WTC11 (cell line): ENCODE measurements at regions of chr9 and their contacts with region 1.

Region 1: DNA sequence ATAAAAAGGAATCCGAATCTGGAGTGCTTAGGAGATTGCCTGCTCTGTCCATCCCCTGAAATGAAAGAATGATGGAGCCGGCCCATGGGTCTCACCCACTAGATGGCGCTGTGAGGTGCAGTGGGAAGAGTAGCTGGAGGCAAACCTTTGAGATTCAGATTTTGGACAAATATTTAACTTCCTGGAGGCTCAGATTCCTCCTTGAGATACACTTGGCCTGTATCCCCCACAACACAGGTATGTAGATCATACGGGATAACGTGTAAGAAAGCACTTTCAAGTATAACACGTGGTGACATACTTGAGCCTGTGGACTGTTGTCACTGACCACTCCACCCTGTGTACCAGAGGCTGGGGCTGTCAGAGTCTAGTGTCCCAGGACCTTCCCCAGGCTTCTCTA is 32.3 kb downstream of the TRMO start:
- DNase-seq: peak; percentile 81
- ATAC-seq: peak; percentile 89
- H3K4me3 Mint-ChIP-seq: no peak overlapping the region
- H3K27ac Mint-ChIP-seq: no peak overlapping the region
- H3K4me1 Mint-ChIP-seq: peaks cover 6% of the 10 kb centered on the region; the same call in 1 of the 2 replicates
- H3K27me3 Mint-ChIP-seq: peaks cover 46% of the 10 kb centered on the region
- CTCF ChIP-seq: peak; percentile 81

Region 2: GRCh38 chr9:97848582-97849237 is 41.3 kb before region 1 on chr9:
- CTCF ChIA-PET with region 1: interaction called, 10 read pairs
- POLR2A ChIA-PET with region 1: no interaction called
- DNase-seq: no peak
- ATAC-seq: no peak
- H3K4me3 Mint-ChIP-seq: peak overlapping the region; percentile 60
- H3K27ac Mint-ChIP-seq: no peak overlapping the region
- H3K4me1 Mint-ChIP-seq: peaks cover 37% of the 10 kb centered on the region
- H3K27me3 Mint-ChIP-seq: peaks cover 89% of the 10 kb centered on the region
- CTCF ChIP-seq: no peak

Region 3: GRCh38 chr9:97863314-97863713 is 26.7 kb before region 1 on chr9:
- CTCF ChIA-PET with region 1: interaction called, 12 read pairs
- POLR2A ChIA-PET with region 1: no interaction called
- DNase-seq: no peak
- ATAC-seq: peak; percentile 50; the same call in 1 of the 2 replicates
- H3K4me3 Mint-ChIP-seq: no peak overlapping the region
- H3K27ac Mint-ChIP-seq: no peak overlapping the region
- H3K4me1 Mint-ChIP-seq: peaks cover 8% of the 10 kb centered on the region
- H3K27me3 Mint-ChIP-seq: peaks cover 83% of the 10 kb centered on the region
- CTCF ChIP-seq: no peak

Region 4: GRCh38 chr9:97868859-97869258 is 21.2 kb before region 1 on chr9:
- CTCF ChIA-PET with region 1: interaction called, 26 read pairs
- POLR2A ChIA-PET with region 1: no interaction called
- DNase-seq: no peak
- ATAC-seq: peak; percentile 72
- H3K4me3 Mint-ChIP-seq: no peak overlapping the region
- H3K27ac Mint-ChIP-seq: no peak overlapping the region
- H3K4me1 Mint-ChIP-seq: peaks cover 16% of the 10 kb centered on the region
- H3K27me3 Mint-ChIP-seq: peaks cover 33% of the 10 kb centered on the region
- CTCF ChIP-seq: no peak

Region 5: GRCh38 chr9:97873877-97874276 is 16.2 kb before region 1 on chr9:
- CTCF ChIA-PET with region 1: interaction called, 26 read pairs
- POLR2A ChIA-PET with region 1: no interaction called
- DNase-seq: no peak
- ATAC-seq: no peak
- H3K4me3 Mint-ChIP-seq: no peak overlapping the region
- H3K27ac Mint-ChIP-seq: no peak overlapping the region
- H3K4me1 Mint-ChIP-seq: peaks cover 12% of the 10 kb centered on the region
- H3K27me3 Mint-ChIP-seq: peaks cover 4% of the 10 kb centered on the region
- CTCF ChIP-seq: no peak

Region 6: DNA sequence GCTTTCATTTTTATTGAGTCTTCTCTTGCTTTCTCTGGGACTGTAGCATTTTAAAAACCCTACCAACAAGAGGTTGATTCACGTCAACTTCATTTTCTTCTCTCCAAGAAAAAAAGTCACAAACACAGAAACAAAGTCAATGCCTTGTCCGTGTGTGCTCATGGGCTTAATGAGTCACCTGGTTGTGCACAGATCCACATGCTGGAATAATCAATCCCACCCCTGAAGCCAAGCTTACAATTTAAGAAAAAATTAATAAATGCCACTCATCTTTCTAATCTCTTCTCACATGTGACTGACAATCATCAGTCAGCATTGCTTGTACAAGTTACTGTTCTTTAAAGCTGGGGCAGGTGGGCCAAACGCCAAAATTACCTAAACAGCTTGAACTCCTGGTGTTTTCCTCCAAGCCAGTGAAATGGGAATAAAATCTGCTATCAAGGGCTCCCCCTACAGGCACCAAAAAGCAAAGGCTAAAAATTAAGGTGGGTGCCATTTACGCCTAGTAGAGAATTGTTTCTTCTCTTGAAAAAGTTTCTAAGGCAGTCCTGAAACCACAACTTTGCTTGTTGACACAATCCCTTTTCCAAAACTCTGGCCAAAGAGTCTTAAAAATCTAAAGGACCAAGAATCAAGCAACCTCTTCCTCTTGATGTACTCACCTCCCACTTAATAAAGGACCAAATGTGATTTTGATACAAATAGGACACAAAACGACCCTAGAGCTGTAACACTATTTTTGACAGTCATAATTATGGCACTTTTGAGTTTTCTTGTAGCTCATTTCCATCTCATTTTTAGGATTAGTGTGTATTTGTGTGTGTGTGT is 10.9 kb after region 1 on chr9:
- CTCF ChIA-PET with region 1: interaction called, 70 read pairs
- POLR2A ChIA-PET with region 1: no interaction called
- DNase-seq: no peak
- ATAC-seq: peak; percentile 65
- H3K4me3 Mint-ChIP-seq: no peak overlapping the region
- H3K27ac Mint-ChIP-seq: no peak overlapping the region
- H3K4me1 Mint-ChIP-seq: peaks cover 3% of the 10 kb centered on the region; the same call in 1 of the 2 replicates
- H3K27me3 Mint-ChIP-seq: no peaks in the 10 kb centered on the region
- CTCF ChIP-seq: peak; percentile 47; the same call in 1 of the 2 replicates

Region 7: DNA sequence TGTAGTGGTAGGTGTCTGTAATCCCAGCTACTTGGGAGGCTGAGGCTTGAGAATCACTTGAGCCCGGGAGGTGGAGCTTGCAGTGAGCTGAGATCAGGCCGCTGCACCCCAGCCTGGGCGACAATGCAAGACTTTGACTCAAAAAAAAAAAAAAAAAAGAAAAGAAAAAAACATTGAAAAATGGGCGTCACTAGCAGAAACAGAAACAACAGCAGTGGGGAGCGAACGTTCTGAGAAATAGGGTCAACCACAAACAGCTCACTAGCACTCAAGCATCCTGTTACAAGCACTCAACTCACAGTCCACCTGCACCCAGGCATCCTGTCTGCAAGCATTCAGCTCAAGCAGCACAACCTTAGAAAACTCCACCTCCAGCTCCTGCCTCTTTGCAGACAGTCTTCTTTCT is 211.8 kb after region 1 on chr9:
- CTCF ChIA-PET with region 1: no interaction called
- POLR2A ChIA-PET with region 1: no interaction called
- DNase-seq: no peak
- ATAC-seq: peak; percentile 86
- H3K4me3 Mint-ChIP-seq: no peak overlapping the region
- H3K27ac Mint-ChIP-seq: no peak overlapping the region
- H3K4me1 Mint-ChIP-seq: peaks cover 18% of the 10 kb centered on the region
- H3K27me3 Mint-ChIP-seq: no peaks in the 10 kb centered on the region
- CTCF ChIP-seq: no peak